ENCODE measurements at regions of chr3 and their contacts with region 1.

Region 1: GRCh38 chr3:189148081-189148507 is 23.7 kb upstream of the TPRG1 start:
- DNase-seq: peak; percentile 81
- ATAC-seq: peak; percentile 66
- H3K4me3 Mint-ChIP-seq: no peak overlapping the region
- H3K27ac Mint-ChIP-seq: no peak overlapping the region
- H3K4me1 Mint-ChIP-seq: peaks cover 17% of the 10 kb centered on the region
- H3K27me3 Mint-ChIP-seq: peaks cover 3% of the 10 kb centered on the region

Region 2: GRCh38 chr3:187616307-187616972 is 1531.7 kb before region 1 on chr3:
- CTCF ChIA-PET with region 1: interaction called, 4 read pairs
- POLR2A ChIA-PET with region 1: no interaction called
- intact Hi-C with region 1: loop called in 1 of 2 experiments (anchors 5 kb)
- DNase-seq: peak; percentile 80
- ATAC-seq: peak; percentile 71
- H3K4me3 Mint-ChIP-seq: no peak overlapping the region
- H3K27ac Mint-ChIP-seq: no peak overlapping the region
- H3K4me1 Mint-ChIP-seq: no peaks in the 10 kb centered on the region
- H3K27me3 Mint-ChIP-seq: peaks cover 8% of the 10 kb centered on the region

Region 3: GRCh38 chr3:188830893-188831292 is 317.2 kb before region 1 on chr3:
- CTCF ChIA-PET with region 1: no interaction called
- POLR2A ChIA-PET with region 1: no interaction called
- intact Hi-C with region 1: loop called in 1 of 2 experiments (anchors 10 kb)
- DNase-seq: peak; percentile 13
- ATAC-seq: no peak
- H3K4me3 Mint-ChIP-seq: no peak overlapping the region
- H3K27ac Mint-ChIP-seq: no peak overlapping the region
- H3K4me1 Mint-ChIP-seq: peaks cover 26% of the 10 kb centered on the region
- H3K27me3 Mint-ChIP-seq: no peaks in the 10 kb centered on the region

Region 4: DNA sequence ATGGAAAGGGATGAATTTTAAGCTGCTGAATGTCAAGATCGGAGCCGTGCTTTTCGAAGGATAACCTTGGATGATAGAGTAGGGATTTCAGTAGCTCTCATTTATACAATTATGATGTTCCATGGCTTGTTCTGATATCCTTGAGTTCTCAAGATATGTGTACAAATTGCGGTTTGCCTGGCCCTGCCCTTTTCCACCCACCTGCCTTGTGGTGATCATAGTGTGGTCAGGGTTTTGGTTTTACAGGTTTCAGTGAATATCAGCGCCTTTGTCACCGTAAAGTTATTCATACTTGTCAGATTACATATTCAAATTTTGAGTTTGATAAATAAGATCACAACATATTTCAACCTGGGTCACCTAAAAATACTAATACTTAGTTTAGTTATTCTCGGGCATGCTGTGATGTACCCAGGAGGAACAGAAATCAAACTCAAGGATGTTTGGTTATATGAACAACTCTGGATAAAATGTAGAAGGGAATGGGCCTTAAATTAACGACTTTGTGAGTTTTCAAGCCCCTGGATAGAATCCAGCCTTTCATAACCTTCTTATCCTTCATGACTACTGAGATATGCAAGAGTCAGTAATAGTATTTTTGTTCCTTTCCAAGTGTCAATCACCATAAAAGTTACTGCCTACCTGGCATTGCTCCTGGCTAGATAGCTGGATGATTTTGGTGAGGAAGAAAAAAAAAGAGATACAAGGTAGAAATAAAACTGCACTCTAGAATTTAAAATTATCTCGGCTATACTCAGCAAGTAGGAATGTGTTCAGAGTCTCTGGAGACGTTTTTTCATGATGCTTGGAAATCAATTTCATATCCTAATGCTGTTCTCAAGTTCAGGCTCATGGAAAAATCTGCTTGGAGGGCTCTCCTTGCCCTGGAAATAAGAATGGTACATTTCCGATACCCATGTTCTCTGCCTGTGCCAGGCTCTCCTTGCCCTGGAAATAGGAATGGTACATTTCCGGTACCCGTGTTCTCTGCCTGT is 185.5 kb before region 1 on chr3:
- CTCF ChIA-PET with region 1: interaction called, 3 read pairs
- POLR2A ChIA-PET with region 1: no interaction called
- intact Hi-C with region 1: loop called in 1 of 2 experiments (anchors 2 kb)
- DNase-seq: peak; percentile 46
- ATAC-seq: no peak
- H3K4me3 Mint-ChIP-seq: no peak overlapping the region
- H3K27ac Mint-ChIP-seq: no peak overlapping the region
- H3K4me1 Mint-ChIP-seq: peaks cover 10% of the 10 kb centered on the region
- H3K27me3 Mint-ChIP-seq: peaks cover 11% of the 10 kb centered on the region